ENCODE measurements at regions of chr3 and their contacts with region 1.

Region 1: DNA sequence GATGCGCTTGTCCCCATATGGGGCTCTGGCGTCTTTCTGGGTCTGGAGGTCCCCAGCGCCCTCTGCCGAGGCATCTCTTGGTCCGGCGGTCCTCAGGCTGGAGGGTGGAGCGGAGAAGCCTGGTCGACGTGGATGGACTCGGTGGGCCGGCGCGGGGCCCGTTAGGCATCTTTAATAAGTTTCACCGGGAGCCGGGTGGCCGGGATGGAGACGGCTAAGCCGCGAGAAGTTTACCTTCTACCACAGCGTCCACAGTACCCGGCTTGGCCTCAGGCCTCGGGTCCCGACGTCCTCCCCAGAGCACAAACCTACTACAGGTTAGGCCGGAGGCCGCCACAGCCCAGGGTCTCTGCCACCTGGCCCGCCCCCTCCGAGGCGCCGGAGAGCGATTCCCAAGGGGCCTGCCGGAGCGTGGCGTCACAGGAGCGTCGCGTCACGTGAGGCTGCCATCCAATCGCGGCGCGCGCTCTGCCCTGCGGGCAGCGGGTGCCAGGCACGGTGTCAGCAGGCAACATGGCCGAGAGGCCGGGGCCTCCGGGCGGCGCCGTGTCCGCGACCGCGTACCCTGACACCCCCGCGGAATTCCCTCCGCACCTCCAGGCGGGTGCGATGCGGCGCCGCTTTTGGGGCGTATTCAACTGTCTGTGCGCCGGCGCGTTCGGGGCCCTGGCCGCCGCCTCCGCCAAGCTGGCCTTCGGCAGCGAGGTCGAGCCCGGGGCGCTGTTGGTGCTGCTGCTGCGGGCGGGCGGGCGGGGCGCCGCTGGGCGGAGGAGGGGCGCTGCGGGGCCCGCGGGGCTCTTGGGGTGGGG is at the start of gene TMEM42:
- DNase-seq: peak; percentile 84 to 99 (median 93)

Region 2: GRCh38 chr3:44338010-44338827 is 523.4 kb before region 1 on chr3 and contains the start of gene TCAIM:
- intact Hi-C with region 1: loop called (anchors 10 kb)
- DNase-seq: peak; percentile 89 to 99 (median 94)

Region 3: DNA sequence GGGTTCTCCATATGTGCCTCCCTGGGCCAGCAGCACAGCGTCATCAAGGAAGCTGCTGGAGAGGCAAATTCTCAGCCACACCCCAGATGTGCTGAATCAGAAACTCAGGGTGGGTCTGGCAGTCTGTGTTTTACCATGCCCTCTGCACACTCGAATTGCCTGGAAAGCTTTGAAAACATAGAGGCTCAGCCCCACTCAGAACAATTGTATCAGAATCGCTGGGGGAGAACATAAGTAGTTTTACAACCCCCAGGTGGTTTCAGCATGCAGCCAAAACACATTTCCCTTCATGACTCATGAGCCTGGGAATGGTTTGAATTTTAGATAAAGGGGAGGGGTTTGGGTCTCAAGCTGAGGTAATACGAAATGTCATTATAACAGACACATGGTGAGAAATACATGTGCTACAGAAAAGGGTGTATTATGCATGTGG is 22.4 kb after region 1 on chr3:
- intact Hi-C with region 1: no loop called
- DNase-seq: no peak

Region 4: DNA sequence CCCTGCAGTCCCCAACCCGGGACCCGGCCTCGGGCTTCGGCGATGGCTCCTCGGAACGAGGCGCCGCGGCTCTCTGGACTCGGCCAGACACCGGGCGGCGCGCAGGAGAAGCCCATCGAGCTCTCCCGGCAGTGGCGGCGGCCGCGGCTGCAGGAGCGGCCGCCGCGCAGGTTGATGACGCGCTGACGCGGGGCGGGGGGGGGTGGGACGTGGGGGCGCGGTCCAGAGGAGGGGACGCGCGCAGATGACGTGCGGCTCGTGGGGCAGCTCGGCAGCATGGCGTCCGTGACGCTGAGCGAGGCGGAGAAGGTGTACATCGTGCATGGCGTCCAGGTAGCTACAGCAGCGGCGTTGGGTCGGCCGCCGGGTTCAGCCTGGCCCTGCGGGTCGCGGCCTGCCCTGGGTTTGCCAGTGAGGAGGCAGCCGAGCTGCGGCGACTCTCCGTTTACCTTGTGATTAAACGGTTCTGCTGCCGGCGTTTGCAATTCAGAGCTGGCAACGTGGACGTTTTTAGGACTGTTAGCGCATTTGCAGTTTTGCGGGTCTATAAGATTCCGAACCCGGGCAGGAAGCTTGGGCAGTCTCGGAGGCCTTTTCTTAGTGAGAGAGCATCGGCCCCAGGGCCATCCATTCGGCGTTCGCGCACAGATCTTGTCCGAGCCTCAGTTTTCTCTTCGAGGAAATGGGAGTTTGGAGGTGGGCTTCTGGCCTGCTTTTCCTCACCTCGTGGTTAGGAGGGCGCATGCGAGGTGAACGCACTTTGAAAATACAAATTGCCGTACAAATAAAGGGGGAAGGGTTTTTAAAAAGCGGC is 114.6 kb after region 1 on chr3 and contains the starts of genes EXOSC7 and ZDHHC3:
- intact Hi-C with region 1: loop called (anchors 2 kb)
- DNase-seq: peak; percentile 80 to 97 (median 84)

Region 5: GRCh38 chr3:45280232-45280631 is 418.6 kb after region 1 on chr3:
- intact Hi-C with region 1: no loop called
- DNase-seq: no peak

Region 6: GRCh38 chr3:45958321-45958791 is 1096.7 kb after region 1 on chr3:
- intact Hi-C with region 1: no loop called
- DNase-seq: no peak